RWPE1 (cell line): ENCODE measurements at regions of chr3 and their contacts with region 1.

Region 1: DNA sequence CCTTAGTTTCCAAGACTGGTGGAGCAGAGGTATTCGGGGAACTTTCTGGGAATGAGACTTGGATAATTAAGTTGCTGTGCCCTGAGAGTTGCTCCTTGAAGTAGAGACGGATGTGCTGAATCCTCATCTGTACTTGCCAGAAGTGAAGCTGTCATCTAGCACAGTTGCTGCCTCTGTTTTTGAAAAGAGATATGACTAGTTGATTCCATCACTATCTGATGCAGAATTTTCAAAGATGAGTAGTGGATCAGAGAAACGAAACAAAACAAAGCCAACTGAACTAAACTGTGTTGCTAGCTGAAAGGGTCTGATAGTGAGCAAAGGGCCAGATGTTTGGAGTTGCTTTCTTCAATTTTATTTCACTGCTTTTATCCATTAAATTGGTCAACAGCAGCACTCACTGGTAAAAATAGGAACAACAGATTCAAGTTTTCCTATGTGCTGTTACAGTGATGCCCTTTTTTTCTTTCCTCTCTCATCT is 52.7 kb downstream of the MITF start:
- DNase-seq: no peak
- H3K27ac ChIP-seq: no peak overlapping the region
- CTCF ChIP-seq: peak; percentile 26

Region 2: GRCh38 chr3:69691860-69692259 is 100.1 kb before region 1 on chr3:
- CTCF ChIA-PET with region 1: interaction called, 10 read pairs
- POLR2A ChIA-PET with region 1: no interaction called
- DNase-seq: no peak
- H3K27ac ChIP-seq: no peak overlapping the region
- CTCF ChIP-seq: no peak

Region 3: DNA sequence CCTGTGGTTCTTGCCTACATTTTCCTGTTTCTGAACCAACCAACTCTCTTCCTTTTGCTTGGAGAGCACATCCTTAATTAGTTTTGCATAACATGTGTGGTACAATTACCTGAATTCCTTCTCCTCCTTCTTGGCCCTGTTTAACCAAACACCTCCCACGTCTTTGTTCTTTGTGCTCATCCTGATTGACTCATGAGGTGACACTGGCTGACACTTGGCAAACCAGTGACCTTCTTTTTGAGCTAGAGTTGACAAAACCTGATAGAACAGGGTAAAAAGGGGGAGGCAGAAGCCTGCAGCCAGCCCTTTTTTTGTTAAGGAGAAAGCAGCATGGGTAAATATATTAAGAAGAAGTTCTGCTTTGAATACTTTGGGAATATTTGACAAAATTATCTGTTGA is 108.4 kb after region 1 on chr3:
- CTCF ChIA-PET with region 1: interaction called, 10 read pairs
- POLR2A ChIA-PET with region 1: no interaction called
- DNase-seq: no peak
- H3K27ac ChIP-seq: no peak overlapping the region
- CTCF ChIP-seq: no peak